SK-MEL-5 (cell line): ENCODE measurements at regions of chr22 and their contacts with region 1.

Region 1: GRCh38 chr22:46881373-46882118 is 119.1 kb downstream of the TBC1D22A start:
- DNase-seq: no peak

Region 2: DNA sequence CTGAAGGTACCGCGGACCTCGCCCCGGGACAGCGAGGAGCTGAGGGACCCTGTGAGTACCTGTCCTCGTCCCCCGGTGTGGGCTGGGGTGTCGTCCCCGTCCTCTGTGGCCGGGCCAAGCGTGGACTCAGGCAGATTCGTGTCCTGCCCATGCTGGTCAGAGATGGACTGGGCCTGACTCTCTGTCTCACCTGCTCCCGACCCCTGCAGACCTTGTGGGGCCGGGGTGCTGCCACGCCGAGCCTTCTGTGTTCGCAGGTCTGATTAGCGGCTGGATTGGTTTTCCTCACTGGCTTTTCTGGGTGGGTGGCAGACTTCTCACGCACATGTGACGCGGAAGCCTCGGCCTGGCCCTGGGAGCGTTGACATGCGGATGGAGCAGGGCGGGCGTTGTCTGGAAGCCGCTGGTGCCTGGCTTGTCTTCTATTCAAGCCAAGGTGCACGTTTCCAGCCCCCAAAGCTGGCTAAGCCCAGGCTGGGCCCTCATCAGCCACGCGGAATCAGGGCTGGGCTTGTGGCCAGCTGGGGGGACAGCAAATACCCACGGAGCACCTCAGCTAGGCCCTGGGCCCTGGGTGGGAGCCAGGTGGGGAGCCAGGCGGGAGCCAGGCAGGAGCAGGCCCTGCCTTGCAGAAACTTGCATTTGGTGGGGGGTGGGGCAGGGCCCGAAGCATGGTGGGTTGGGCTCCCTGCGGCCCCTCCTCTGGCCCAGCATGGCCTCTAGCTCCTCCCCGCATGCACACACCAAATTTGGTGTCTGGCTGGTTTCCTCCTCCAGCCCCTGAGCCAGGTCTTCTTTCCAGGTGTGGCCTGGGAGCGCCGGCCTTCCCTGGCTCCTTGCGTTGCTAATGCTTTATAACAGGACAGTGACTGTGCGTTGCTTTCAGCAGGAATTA is 254.4 kb before region 1 on chr22:
- in situ Hi-C with region 1: no loop called
- DNase-seq: no peak

Region 3: GRCh38 chr22:46829941-46830715 is 51.4 kb before region 1 on chr22:
- in situ Hi-C with region 1: loop called (anchors 10 kb)
- DNase-seq: no peak